ENCODE measurements at regions of chr6 and their contacts with region 1.

Region 1: GRCh38 chr6:134882426-134883038 is 67.4 kb downstream of the ALDH8A1 start:
- DNase-seq: peak; percentile 73
- ATAC-seq: peak; percentile 77
- H3K4me3 Mint-ChIP-seq: no peak overlapping the region
- H3K27ac Mint-ChIP-seq: no peak overlapping the region
- H3K4me1 Mint-ChIP-seq: no peaks in the 10 kb centered on the region
- H3K27me3 Mint-ChIP-seq: no peaks in the 10 kb centered on the region; the same call in 1 of the 2 replicates
- CTCF ChIP-seq: peak; percentile 86

Region 2: GRCh38 chr6:134714679-134715421 is 167.7 kb before region 1 on chr6:
- CTCF ChIA-PET with region 1: no interaction called
- POLR2A ChIA-PET with region 1: no interaction called
- DNase-seq: no peak
- ATAC-seq: no peak
- H3K4me3 Mint-ChIP-seq: no peak overlapping the region
- H3K27ac Mint-ChIP-seq: no peak overlapping the region
- H3K4me1 Mint-ChIP-seq: peaks cover 4% of the 10 kb centered on the region
- H3K27me3 Mint-ChIP-seq: no peaks in the 10 kb centered on the region
- CTCF ChIP-seq: no peak

Region 3: GRCh38 chr6:134918418-134918961 is 36.0 kb after region 1 on chr6:
- CTCF ChIA-PET with region 1: interaction called, 13 read pairs
- POLR2A ChIA-PET with region 1: no interaction called
- DNase-seq: no peak
- ATAC-seq: peak; percentile 59
- H3K4me3 Mint-ChIP-seq: no peak overlapping the region
- H3K27ac Mint-ChIP-seq: no peak overlapping the region
- H3K4me1 Mint-ChIP-seq: peaks cover 8% of the 10 kb centered on the region; the same call in 1 of the 2 replicates
- H3K27me3 Mint-ChIP-seq: no peaks in the 10 kb centered on the region
- CTCF ChIP-seq: no peak